ENCODE measurements at regions of chr2 and their contacts with region 1.

Region 1: GRCh38 chr2:118855451-118856279 is 8.2 kb upstream of the EN1 start:
- DNase-seq: peak; percentile 60 to 84 (median 77)
- H3K4me3 ChIP-seq: no peak overlapping the region
- H3K4me3 Mint-ChIP-seq: peak overlapping the region; percentile 58 to 80 (median 64)
- H3K27ac ChIP-seq: no peak overlapping the region
- H3K27ac Mint-ChIP-seq: peak overlapping the region in 1 of 7 donors; percentile 68
- H3K4me1 ChIP-seq: peaks cover 19% of the 10 kb centered on the region
- H3K4me1 Mint-ChIP-seq: peaks cover 17 to 33% (median 21%) of the 10 kb centered on the region in 4 donors
- H3K27me3 ChIP-seq: peaks cover 65% of the 10 kb centered on the region
- H3K27me3 Mint-ChIP-seq: peaks cover 60 to 64% of the 10 kb centered on the region in 2 donors

Region 2: GRCh38 chr2:118032169-118033013 is 823.3 kb before region 1 on chr2:
- CTCF ChIA-PET with region 1: interaction called, 7 read pairs
- POLR2A ChIA-PET with region 1: no interaction called
- intact Hi-C with region 1: loop called (anchors 1 kb)
- DNase-seq: peak in 3 of 5 donors; percentile 27 to 32 (median 29)
- H3K4me3 ChIP-seq: no peak overlapping the region
- H3K4me3 Mint-ChIP-seq: no peak overlapping the region
- H3K27ac ChIP-seq: no peak overlapping the region
- H3K27ac Mint-ChIP-seq: peak overlapping the region in 1 of 7 donors; percentile 5
- H3K4me1 ChIP-seq: no peaks in the 10 kb centered on the region
- H3K4me1 Mint-ChIP-seq: no peaks in the 10 kb centered on the region
- H3K27me3 ChIP-seq: peaks cover 9% of the 10 kb centered on the region
- H3K27me3 Mint-ChIP-seq: peaks cover 26 to 31% of the 10 kb centered on the region in 2 donors

Region 3: GRCh38 chr2:118216224-118216623 is 639.4 kb before region 1 on chr2:
- CTCF ChIA-PET with region 1: interaction called, 67 read pairs
- POLR2A ChIA-PET with region 1: interaction called, 5 read pairs
- intact Hi-C with region 1: no loop called
- DNase-seq: no peak
- H3K4me3 ChIP-seq: no peak overlapping the region
- H3K4me3 Mint-ChIP-seq: no peak overlapping the region
- H3K27ac ChIP-seq: no peak overlapping the region
- H3K27ac Mint-ChIP-seq: no peak overlapping the region
- H3K4me1 ChIP-seq: no peaks in the 10 kb centered on the region
- H3K4me1 Mint-ChIP-seq: no peaks in the 10 kb centered on the region
- H3K27me3 ChIP-seq: peaks cover 8% of the 10 kb centered on the region
- H3K27me3 Mint-ChIP-seq: peaks cover 23 to 28% of the 10 kb centered on the region in 2 donors

Region 4: GRCh38 chr2:118774458-118775133 is 81.1 kb before region 1 on chr2:
- CTCF ChIA-PET with region 1: no interaction called
- POLR2A ChIA-PET with region 1: no interaction called
- intact Hi-C with region 1: no loop called
- DNase-seq: no peak
- H3K4me3 ChIP-seq: no peak overlapping the region
- H3K4me3 Mint-ChIP-seq: peak overlapping the region in 5 of 8 donors; percentile 35 to 69 (median 52)
- H3K27ac ChIP-seq: no peak overlapping the region
- H3K27ac Mint-ChIP-seq: no peak overlapping the region
- H3K4me1 ChIP-seq: no peaks in the 10 kb centered on the region
- H3K4me1 Mint-ChIP-seq: peaks cover 0 to 7% (median 3%) of the 10 kb centered on the region in 4 donors
- H3K27me3 ChIP-seq: peaks cover 2% of the 10 kb centered on the region
- H3K27me3 Mint-ChIP-seq: peaks cover 22 to 25% of the 10 kb centered on the region in 2 donors

Region 5: GRCh38 chr2:118842661-118843482 is 12.8 kb before region 1 on chr2:
- CTCF ChIA-PET with region 1: interaction called, 14 read pairs
- POLR2A ChIA-PET with region 1: no interaction called
- intact Hi-C with region 1: no loop called
- DNase-seq: no peak
- H3K4me3 ChIP-seq: peak overlapping the region in 1 of 2 donors; percentile 47
- H3K4me3 Mint-ChIP-seq: peak overlapping the region; percentile 59 to 91 (median 77)
- H3K27ac ChIP-seq: no peak overlapping the region
- H3K27ac Mint-ChIP-seq: no peak overlapping the region
- H3K4me1 ChIP-seq: peaks cover 21% of the 10 kb centered on the region
- H3K4me1 Mint-ChIP-seq: peaks cover 13 to 44% (median 28%) of the 10 kb centered on the region in 4 donors
- H3K27me3 ChIP-seq: peaks cover 62% of the 10 kb centered on the region
- H3K27me3 Mint-ChIP-seq: peaks cover 63 to 72% of the 10 kb centered on the region in 2 donors

Measured in CD4-positive, alpha-beta memory T cell (primary cell).